Activated CD8-positive, alpha-beta memory T cell treated with anti-CD3 and anti-CD28 coated beads, Interleukin-2, amount 10 ng/mL, durations not matched to agents 7 days and 5 days (primary cell): ENCODE measurements at regions of chr13 and their contacts with region 1.

Region 1: GRCh38 chr13:24671386-24672107 is 8.7 kb upstream of the ATP12A start:
- DNase-seq: no peak
- ATAC-seq: peak; percentile 30
- H3K4me3 Mint-ChIP-seq: no peak overlapping the region
- H3K27ac Mint-ChIP-seq: no peak overlapping the region
- H3K4me1 Mint-ChIP-seq: peaks cover 20% of the 10 kb centered on the region
- H3K27me3 Mint-ChIP-seq: peaks cover 4% of the 10 kb centered on the region

Region 2: GRCh38 chr13:24528816-24529398 is 142.6 kb before region 1 on chr13:
- CTCF ChIA-PET with region 1: no interaction called
- DNase-seq: no peak
- ATAC-seq: no peak
- H3K4me3 Mint-ChIP-seq: no peak overlapping the region
- H3K27ac Mint-ChIP-seq: no peak overlapping the region
- H3K4me1 Mint-ChIP-seq: no peaks in the 10 kb centered on the region
- H3K27me3 Mint-ChIP-seq: peaks cover 55% of the 10 kb centered on the region

Region 3: GRCh38 chr13:24683838-24684599 is 12.5 kb after region 1 on chr13:
- CTCF ChIA-PET with region 1: interaction called, 11 read pairs
- DNase-seq: peak; percentile 81
- ATAC-seq: peak; percentile 77
- H3K4me3 Mint-ChIP-seq: no peak overlapping the region
- H3K27ac Mint-ChIP-seq: peak overlapping the region; percentile 68
- H3K4me1 Mint-ChIP-seq: peaks cover 43% of the 10 kb centered on the region
- H3K27me3 Mint-ChIP-seq: peaks cover 41% of the 10 kb centered on the region

Region 4: DNA sequence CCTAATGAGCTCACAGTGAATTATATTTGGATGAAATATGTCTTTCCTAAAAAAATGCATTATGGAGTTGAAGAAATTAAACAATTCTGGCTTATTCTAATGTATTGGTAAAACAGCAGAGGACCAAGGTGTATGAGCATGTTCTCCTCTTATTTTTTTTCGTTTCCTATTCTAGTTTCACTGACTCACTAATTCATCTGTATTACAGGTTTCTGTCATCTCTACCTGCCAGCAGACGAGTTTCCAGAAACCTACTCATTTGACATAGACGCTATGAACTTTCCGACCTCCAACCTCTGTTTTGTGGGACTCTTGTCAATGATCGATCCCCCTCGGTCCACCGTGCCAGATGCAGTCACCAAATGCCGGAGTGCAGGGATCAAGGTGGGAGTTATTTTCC is 29.0 kb after region 1 on chr13:
- CTCF ChIA-PET with region 1: no interaction called
- DNase-seq: no peak
- ATAC-seq: no peak
- H3K4me3 Mint-ChIP-seq: no peak overlapping the region
- H3K27ac Mint-ChIP-seq: no peak overlapping the region
- H3K4me1 Mint-ChIP-seq: peaks cover 16% of the 10 kb centered on the region
- H3K27me3 Mint-ChIP-seq: peaks cover 31% of the 10 kb centered on the region